ENCODE measurements at regions of chr15 and their contacts with region 1.

Region 1: GRCh38 chr15:72375847-72376581 is at the start of gene HEXA:
- DNase-seq: peak; percentile 95 to 96 (median 96)
- H3K4me3 ChIP-seq: peak within 1 kb of the TSS; percentile 45 to 95
- H3K4me3 Mint-ChIP-seq: peak within 1 kb of the TSS; percentile 89 to 99 (median 94)
- H3K27ac ChIP-seq: peak within 1 kb of the TSS; percentile 79
- H3K27ac Mint-ChIP-seq: peak within 1 kb of the TSS; percentile 93 to 99 (median 98)
- H3K4me1 ChIP-seq: peaks cover 39% of the 10 kb centered on the region
- H3K4me1 Mint-ChIP-seq: peaks cover 35 to 70% (median 49%) of the 10 kb centered on the region in 4 donors
- H3K27me3 ChIP-seq: no peaks in the 10 kb centered on the region
- H3K27me3 Mint-ChIP-seq: no peaks in the 10 kb centered on the region
- total RNA-seq, gene HEXA: 84.4 to 84.6 TPM

Region 2: DNA sequence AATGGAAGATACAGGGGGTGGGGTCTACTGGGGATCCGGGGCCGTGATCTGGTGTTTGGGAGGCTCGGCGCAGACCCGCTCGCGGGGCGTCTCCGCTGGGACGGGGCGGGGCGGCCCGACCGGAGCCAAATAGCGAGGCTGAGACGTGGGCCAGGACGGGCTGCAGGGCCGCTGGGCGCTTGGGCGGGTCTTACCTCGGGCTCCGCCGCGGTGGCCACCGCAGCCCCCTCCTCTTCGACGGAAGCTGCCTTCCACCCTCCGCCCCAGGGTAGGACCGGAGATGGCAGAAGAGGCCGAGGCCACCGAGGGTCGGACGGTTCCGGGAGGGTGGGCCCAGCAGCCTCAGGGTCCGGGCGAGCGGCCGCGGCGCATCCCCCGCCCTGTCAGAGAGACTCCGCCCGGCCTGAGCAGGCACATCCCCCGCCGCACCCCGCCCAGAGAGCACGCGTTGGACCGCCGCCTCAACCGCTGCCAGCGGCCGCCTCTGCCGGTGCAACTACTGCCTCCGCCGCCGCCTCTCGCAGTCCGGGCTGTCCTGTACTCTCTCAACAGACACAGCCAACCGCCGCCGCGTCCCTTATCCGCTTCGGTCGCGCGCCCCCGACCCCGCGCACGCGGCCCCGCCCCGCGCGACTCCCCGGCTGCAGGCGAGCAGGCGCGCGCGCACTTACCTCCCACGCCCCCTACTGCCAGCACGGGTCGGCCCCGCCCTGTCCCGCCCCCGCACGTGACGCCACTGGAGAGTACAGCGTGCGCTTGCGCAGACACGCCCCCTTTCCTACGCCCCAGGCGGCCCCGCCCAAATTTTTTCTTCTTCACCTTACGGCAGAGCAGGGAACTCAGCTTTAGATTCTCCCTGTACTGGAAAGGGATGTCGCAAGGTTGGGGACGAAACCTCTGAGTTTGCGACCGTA is 258.3 kb before region 1 on chr15 and contains the start of gene MYO9A:
- CTCF ChIA-PET with region 1: no interaction called
- POLR2A ChIA-PET with region 1: no interaction called
- intact Hi-C with region 1: loop called (anchors 5 kb)
- DNase-seq: peak; percentile 97 to 98 (median 98)
- H3K4me3 ChIP-seq: peak within 1 kb of the TSS; percentile 89
- H3K4me3 Mint-ChIP-seq: peak within 1 kb of the TSS; percentile 93 to 100 (median 98)
- H3K27ac ChIP-seq: peak within 1 kb of the TSS; percentile 94
- H3K27ac Mint-ChIP-seq: peak within 1 kb of the TSS; percentile 96 to 99 (median 99)
- H3K4me1 ChIP-seq: peaks cover 23% of the 10 kb centered on the region
- H3K4me1 Mint-ChIP-seq: peaks cover 27 to 60% (median 41%) of the 10 kb centered on the region in 4 donors
- H3K27me3 ChIP-seq: no peaks in the 10 kb centered on the region
- H3K27me3 Mint-ChIP-seq: no peaks in the 10 kb centered on the region
- total RNA-seq, gene MYO9A: 37.9 to 44.0 TPM

Region 3: DNA sequence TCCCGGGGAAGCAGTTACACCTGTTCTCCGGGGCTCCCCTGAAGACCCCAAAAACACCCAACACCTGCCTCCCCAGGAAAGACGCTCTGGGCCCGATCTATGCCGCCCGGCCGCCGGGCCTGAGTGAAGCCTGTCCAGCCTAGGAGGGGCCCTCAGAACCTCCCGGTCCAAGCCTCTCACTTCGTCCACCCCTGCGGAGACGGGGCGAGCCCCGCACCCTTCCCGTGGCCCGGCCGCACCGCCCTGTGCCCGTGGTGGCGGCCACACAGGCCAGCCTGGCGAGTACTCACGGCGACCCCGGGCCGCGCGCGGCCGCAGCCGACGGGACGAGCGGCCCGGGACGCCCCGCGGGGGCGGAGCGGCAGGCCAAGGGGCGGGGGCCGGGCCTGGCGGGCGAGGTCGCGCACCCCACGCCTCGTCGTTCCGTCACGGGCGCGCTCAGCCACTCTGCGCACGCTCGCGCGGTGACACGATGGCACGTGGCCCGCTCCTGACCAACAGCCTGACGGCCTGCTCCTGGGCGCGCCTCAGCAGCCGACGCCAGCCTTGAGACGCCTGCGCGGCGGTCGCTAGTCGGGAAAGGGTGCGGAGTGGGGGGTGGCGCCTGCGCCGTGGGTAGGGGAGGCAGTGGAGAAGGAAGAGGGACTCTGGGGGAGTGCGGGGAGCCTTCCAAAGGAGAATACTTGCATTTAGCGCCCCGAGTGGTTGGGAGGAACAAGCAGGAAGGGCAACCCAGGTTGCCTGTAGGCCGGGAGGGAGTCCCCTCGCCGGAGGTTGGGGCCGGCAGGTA is 103.6 kb before region 1 on chr15 and contains the start of gene PARP6:
- CTCF ChIA-PET with region 1: no interaction called
- POLR2A ChIA-PET with region 1: interaction called, 3 read pairs
- intact Hi-C with region 1: loop called (anchors 10 kb)
- DNase-seq: peak; percentile 98 to 100 (median 100)
- H3K4me3 ChIP-seq: peak within 1 kb of the TSS; percentile 26 to 65
- H3K4me3 Mint-ChIP-seq: peak within 1 kb of the TSS; percentile 85 to 93 (median 88)
- H3K27ac ChIP-seq: peak within 1 kb of the TSS; percentile 87
- H3K27ac Mint-ChIP-seq: peak within 1 kb of the TSS; percentile 93 to 97 (median 95)
- H3K4me1 ChIP-seq: peaks cover 34% of the 10 kb centered on the region
- H3K4me1 Mint-ChIP-seq: peaks cover 27 to 43% (median 36%) of the 10 kb centered on the region in 4 donors
- H3K27me3 ChIP-seq: no peaks in the 10 kb centered on the region
- H3K27me3 Mint-ChIP-seq: no peaks in the 10 kb centered on the region
- total RNA-seq, gene PARP6: 111 TPM

Region 4: DNA sequence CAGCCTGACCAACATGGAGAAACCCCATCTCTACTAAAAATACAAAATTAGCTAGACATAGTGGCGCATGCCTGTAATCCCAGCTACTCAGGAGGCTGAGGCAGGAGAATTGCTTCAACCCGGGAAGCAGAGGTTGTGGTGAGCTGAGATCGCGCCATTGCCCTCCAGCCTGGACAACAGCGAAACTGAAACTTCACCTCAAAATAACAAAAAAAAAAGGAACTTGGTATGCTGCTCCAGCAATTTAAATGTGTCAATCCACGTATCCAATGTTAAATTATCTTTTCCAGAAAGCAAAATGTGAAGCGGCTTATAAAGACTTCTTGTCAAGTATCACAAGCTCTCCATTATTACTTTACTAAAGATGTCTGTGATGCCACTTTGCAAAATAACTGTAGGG is 88.2 kb after region 1 on chr15:
- CTCF ChIA-PET with region 1: interaction called, 4 read pairs
- POLR2A ChIA-PET with region 1: interaction called, 22 read pairs
- intact Hi-C with region 1: no loop called
- DNase-seq: no peak
- H3K4me3 ChIP-seq: no peak overlapping the region
- H3K4me3 Mint-ChIP-seq: no peak overlapping the region
- H3K27ac ChIP-seq: no peak overlapping the region
- H3K27ac Mint-ChIP-seq: no peak overlapping the region
- H3K4me1 ChIP-seq: peaks cover 7% of the 10 kb centered on the region
- H3K4me1 Mint-ChIP-seq: peaks cover 6 to 19% (median 9%) of the 10 kb centered on the region in 4 donors
- H3K27me3 ChIP-seq: no peaks in the 10 kb centered on the region
- H3K27me3 Mint-ChIP-seq: no peaks in the 10 kb centered on the region

Region 5: DNA sequence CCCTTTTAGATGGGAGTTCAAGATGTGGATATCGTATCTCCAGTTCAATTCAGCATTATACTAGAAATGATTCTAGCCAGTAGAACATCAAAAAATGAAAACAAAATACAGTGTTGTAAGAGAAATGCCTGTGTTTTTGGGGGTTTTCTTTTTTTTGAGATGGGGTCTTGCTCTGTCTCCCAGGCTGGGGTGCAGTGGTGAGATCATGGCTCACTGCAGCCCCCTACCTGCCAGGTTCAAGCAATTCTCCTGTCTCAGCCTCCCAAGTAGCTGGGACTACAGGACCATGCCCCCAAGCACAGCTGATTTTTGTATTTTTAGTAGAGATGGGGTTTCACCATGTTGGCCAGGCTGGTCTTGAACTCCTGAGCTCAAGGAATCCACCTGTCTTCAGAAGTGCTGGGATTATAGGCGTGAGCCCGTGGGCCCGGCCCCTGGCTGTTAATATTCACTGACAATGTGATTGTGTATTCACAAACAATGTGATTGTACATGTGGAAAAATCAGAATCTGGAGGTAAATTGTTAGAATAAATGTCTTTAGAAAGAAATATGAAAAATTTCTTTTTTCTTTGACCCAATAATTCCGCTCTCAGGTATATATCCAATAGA is 157.1 kb after region 1 on chr15:
- CTCF ChIA-PET with region 1: interaction called, 4 read pairs
- POLR2A ChIA-PET with region 1: no interaction called
- intact Hi-C with region 1: loop called (anchors 5 kb)
- DNase-seq: peak in 4 of 5 donors; percentile 22 to 29 (median 28)
- H3K4me3 ChIP-seq: no peak overlapping the region
- H3K4me3 Mint-ChIP-seq: peak overlapping the region in 1 of 8 donors; percentile 46
- H3K27ac ChIP-seq: no peak overlapping the region
- H3K27ac Mint-ChIP-seq: peak overlapping the region in 1 of 7 donors; percentile 69
- H3K4me1 ChIP-seq: peaks cover 37% of the 10 kb centered on the region
- H3K4me1 Mint-ChIP-seq: peaks cover 33 to 78% (median 49%) of the 10 kb centered on the region in 4 donors
- H3K27me3 ChIP-seq: no peaks in the 10 kb centered on the region
- H3K27me3 Mint-ChIP-seq: no peaks in the 10 kb centered on the region

Measured in CD4-positive, alpha-beta memory T cell (primary cell).